Common myeloid progenitor, CD34-positive (primary cell): ENCODE measurements at regions of chr12 and their contacts with region 1.

Region 1: GRCh38 chr12:3998968-3999826 is 126.0 kb upstream of the PARP11 start:
- DNase-seq: peak in 2 of 3 donors; percentile 16 to 24
- H3K4me3 ChIP-seq: no peak overlapping the region
- H3K27ac ChIP-seq: no peak overlapping the region
- H3K4me1 ChIP-seq: peaks cover 0 to 13% (median 6%) of the 10 kb centered on the region in 4 experiments
- H3K27me3 ChIP-seq: no peaks in the 10 kb centered on the region

Region 2: DNA sequence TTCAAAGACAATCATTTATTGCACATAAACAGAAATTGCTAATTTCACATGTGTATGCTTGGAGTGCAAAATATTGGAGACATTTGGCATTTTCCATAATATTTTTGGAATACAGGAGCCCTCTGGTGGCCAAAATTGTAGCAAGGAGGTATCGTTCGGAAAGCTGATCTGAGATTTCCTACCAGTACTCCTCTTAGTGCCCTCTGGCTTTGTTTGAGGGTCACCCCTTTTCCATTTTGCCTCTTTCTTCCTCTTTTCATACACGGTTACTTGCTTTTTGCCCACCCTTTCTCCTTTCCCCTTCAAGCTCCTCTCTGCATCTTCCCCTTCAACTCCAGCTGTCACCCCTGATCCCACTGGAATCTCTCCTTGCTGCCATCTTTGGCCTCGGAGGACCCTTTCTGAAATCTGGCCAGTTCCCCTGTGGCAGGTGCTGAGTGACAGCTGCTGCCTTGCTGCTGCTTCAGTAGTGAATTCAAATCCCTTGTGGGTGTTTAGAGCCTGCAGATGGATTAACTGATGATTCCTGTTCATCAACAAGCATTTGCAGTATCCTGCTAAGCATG is 38.6 kb after region 1 on chr12:
- CTCF ChIA-PET with region 1: interaction called, 11 read pairs
- POLR2A ChIA-PET with region 1: no interaction called
- DNase-seq: peak; percentile 28 to 49 (median 48)
- H3K4me3 ChIP-seq: no peak overlapping the region
- H3K27ac ChIP-seq: no peak overlapping the region
- H3K4me1 ChIP-seq: peaks cover 0 to 6% (median 0%) of the 10 kb centered on the region in 4 experiments
- H3K27me3 ChIP-seq: no peaks in the 10 kb centered on the region

Region 3: GRCh38 chr12:4099276-4099675 is 100.1 kb after region 1 on chr12:
- CTCF ChIA-PET with region 1: interaction called, 50 read pairs
- POLR2A ChIA-PET with region 1: no interaction called
- DNase-seq: peak in 2 of 3 donors; percentile 41 to 45
- H3K4me3 ChIP-seq: no peak overlapping the region
- H3K27ac ChIP-seq: no peak overlapping the region
- H3K4me1 ChIP-seq: no peaks in the 10 kb centered on the region
- H3K27me3 ChIP-seq: no peaks in the 10 kb centered on the region

Region 4: GRCh38 chr12:4287325-4288211 is 288.4 kb after region 1 on chr12:
- CTCF ChIA-PET with region 1: interaction called, 10 read pairs
- POLR2A ChIA-PET with region 1: no interaction called
- DNase-seq: peak in 2 of 3 donors; percentile 46 to 60
- H3K4me3 ChIP-seq: no peak overlapping the region
- H3K27ac ChIP-seq: no peak overlapping the region
- H3K4me1 ChIP-seq: peaks cover 0 to 57% (median 52%) of the 10 kb centered on the region in 4 experiments
- H3K27me3 ChIP-seq: no peaks in the 10 kb centered on the region